Activated CD4-positive, alpha-beta T cell treated with anti-CD3 and anti-CD28 coated beads, Interleukin-2, amount 10 ng/mL, durations not matched to agents 24 days and 14 days (primary cell): ENCODE measurements at regions of chr1 and their contacts with region 1.

Region 1: GRCh38 chr1:182789138-182790076 is at the start of gene NPL:
- DNase-seq: peak; percentile 96
- H3K4me3 Mint-ChIP-seq: peak within 1 kb of the TSS; percentile 89
- H3K27ac Mint-ChIP-seq: peak within 1 kb of the TSS; percentile 83
- H3K4me1 Mint-ChIP-seq: peaks cover 10% of the 10 kb centered on the region
- H3K27me3 Mint-ChIP-seq: peaks cover 18% of the 10 kb centered on the region
- total RNA-seq, gene NPL: 4.4 and 5.5 TPM in 2 replicates

Region 2: GRCh38 chr1:182143154-182143657 is 646.2 kb before region 1 on chr1:
- intact Hi-C with region 1: loop called (anchors 10 kb)
- DNase-seq: peak; percentile 96
- H3K4me3 Mint-ChIP-seq: no peak overlapping the region
- H3K27ac Mint-ChIP-seq: no peak overlapping the region
- H3K4me1 Mint-ChIP-seq: peaks cover 25% of the 10 kb centered on the region
- H3K27me3 Mint-ChIP-seq: peaks cover 6% of the 10 kb centered on the region

Region 3: DNA sequence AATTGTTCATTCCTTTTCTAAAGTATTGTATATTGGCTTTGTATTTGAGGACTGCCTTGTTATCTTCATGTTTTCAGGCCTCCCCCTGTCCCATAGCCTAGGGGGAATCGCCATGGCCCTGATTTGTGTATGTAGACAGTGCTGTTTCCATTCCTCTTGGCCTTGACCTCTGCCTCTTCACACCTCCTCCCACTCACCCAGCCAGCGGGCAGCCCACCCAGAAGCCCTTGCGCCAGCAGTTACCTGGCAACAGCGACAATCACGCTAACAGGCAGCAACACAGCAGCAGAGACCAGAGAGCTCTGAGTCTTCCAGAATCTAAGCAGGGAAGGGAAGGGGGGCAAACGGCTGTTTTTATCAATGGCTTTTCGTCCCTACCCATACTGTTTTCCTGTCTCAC is 49.9 kb before region 1 on chr1:
- intact Hi-C with region 1: no loop called
- DNase-seq: no peak
- H3K4me3 Mint-ChIP-seq: no peak overlapping the region
- H3K27ac Mint-ChIP-seq: no peak overlapping the region
- H3K4me1 Mint-ChIP-seq: peaks cover 2% of the 10 kb centered on the region
- H3K27me3 Mint-ChIP-seq: peaks cover 2% of the 10 kb centered on the region

Region 4: DNA sequence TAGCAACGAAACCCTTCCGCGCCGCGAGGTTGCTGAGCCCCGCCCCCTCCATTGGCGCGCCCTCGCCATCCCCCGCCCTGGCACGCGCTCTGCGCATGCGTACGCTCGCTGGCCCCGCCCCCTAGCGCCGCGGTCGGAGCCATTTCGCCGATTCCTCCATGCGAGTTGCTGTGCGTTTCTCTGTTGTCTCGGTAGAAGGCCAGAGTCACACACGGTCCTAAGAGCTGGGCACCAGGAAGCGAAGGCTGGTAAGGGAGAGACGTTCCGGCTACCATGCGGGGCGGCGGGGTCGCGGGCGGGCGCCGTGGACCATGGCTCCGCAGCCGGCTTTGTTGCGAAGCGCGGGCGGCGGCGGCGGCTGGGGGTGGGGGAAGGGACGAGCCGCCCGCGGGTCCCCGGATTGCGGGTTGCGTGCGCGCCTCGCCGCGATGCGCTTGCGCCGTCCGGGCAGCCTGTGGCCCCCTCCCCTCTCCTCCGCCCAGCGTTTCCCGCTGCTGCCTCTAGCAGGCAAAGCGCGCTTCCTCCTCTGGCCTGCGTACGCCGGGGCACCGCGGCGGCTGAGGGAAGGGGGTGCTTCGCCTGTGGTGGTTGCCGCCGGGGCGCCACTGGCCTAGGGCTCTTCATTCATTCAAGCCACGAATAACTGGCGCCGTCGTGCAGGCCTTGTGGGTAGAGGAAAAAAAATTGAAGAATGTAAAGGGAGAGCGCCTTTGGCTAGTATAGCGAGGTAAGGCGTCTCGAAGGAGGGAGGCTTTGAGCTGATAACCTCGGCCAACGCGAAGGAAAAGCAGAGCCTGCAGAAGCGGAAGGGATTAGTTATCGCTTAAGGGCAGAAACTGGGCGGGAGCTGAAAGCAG is 50.0 kb after region 1 on chr1 and contains the start of gene DHX9:
- intact Hi-C with region 1: loop called (anchors 1 kb)
- DNase-seq: peak; percentile 99
- H3K4me3 Mint-ChIP-seq: peak within 1 kb of the TSS; percentile 92
- H3K27ac Mint-ChIP-seq: peak within 1 kb of the TSS; percentile 94
- H3K4me1 Mint-ChIP-seq: peaks cover 37% of the 10 kb centered on the region
- H3K27me3 Mint-ChIP-seq: peaks cover 3% of the 10 kb centered on the region
- total RNA-seq, gene DHX9: 344 and 355 TPM in 2 replicates